ENCODE measurements at regions of chr3 and their contacts with region 1.

Region 1: GRCh38 chr3:39288300-39288808 is 8.5 kb upstream of the CX3CR1 start:
- DNase-seq: peak; percentile 91
- H3K4me3 Mint-ChIP-seq: no peak overlapping the region
- H3K27ac Mint-ChIP-seq: no peak overlapping the region
- H3K4me1 Mint-ChIP-seq: peaks cover 22% of the 10 kb centered on the region
- H3K27me3 Mint-ChIP-seq: no peaks in the 10 kb centered on the region
- CTCF ChIP-seq: peak; percentile 85

Region 2: GRCh38 chr3:39101022-39101689 is 187.2 kb before region 1 on chr3:
- CTCF ChIA-PET with region 1: interaction called, 11 read pairs
- intact Hi-C with region 1: loop called (anchors 1 kb)
- DNase-seq: peak; percentile 58
- H3K4me3 Mint-ChIP-seq: no peak overlapping the region
- H3K27ac Mint-ChIP-seq: no peak overlapping the region
- H3K4me1 Mint-ChIP-seq: peaks cover 50% of the 10 kb centered on the region
- H3K27me3 Mint-ChIP-seq: no peaks in the 10 kb centered on the region
- CTCF ChIP-seq: peak; percentile 71

Region 3: GRCh38 chr3:39126532-39127071 is 161.8 kb before region 1 on chr3:
- CTCF ChIA-PET with region 1: interaction called, 74 read pairs
- intact Hi-C with region 1: loop called (anchors 1 kb)
- DNase-seq: peak; percentile 68
- H3K4me3 Mint-ChIP-seq: peak overlapping the region; percentile 60
- H3K27ac Mint-ChIP-seq: peak overlapping the region; percentile 80
- H3K4me1 Mint-ChIP-seq: peaks cover 24% of the 10 kb centered on the region
- H3K27me3 Mint-ChIP-seq: no peaks in the 10 kb centered on the region
- CTCF ChIP-seq: peak; percentile 29

Region 4: GRCh38 chr3:39196671-39197356 is 91.5 kb before region 1 on chr3:
- CTCF ChIA-PET with region 1: interaction called, 12 read pairs
- intact Hi-C with region 1: no loop called
- DNase-seq: no peak
- H3K4me3 Mint-ChIP-seq: no peak overlapping the region
- H3K27ac Mint-ChIP-seq: no peak overlapping the region
- H3K4me1 Mint-ChIP-seq: peaks cover 6% of the 10 kb centered on the region
- H3K27me3 Mint-ChIP-seq: peaks cover 10% of the 10 kb centered on the region
- CTCF ChIP-seq: no peak

Region 5: GRCh38 chr3:39378088-39378487 is 89.7 kb after region 1 on chr3:
- CTCF ChIA-PET with region 1: interaction called, 32 read pairs
- intact Hi-C with region 1: loop called (anchors 2 kb)
- DNase-seq: peak; percentile 71
- H3K4me3 Mint-ChIP-seq: no peak overlapping the region
- H3K27ac Mint-ChIP-seq: no peak overlapping the region
- H3K4me1 Mint-ChIP-seq: peaks cover 9% of the 10 kb centered on the region
- H3K27me3 Mint-ChIP-seq: no peaks in the 10 kb centered on the region
- CTCF ChIP-seq: peak; percentile 57

Region 6: DNA sequence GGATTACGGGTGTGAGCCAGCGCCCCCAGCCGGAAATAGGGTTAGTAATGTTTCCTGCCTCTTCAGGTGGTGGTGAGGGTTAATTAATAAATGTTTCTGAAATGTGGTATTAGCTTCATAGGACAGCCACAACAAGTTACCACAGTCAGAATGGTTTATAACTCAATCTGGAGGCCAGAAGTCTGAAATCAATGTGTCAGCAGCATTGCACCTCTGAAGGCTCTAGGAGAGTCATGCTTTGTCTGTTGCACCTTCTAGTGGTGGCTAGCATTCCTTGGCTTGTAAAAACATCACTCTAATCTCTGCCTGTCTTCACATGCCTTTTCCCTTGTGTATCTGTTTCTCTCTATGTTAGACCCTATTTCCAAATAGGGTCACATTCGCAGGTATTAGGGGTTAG is 110.3 kb after region 1 on chr3:
- CTCF ChIA-PET with region 1: no interaction called
- intact Hi-C with region 1: no loop called
- DNase-seq: no peak
- H3K4me3 Mint-ChIP-seq: no peak overlapping the region
- H3K27ac Mint-ChIP-seq: no peak overlapping the region
- H3K4me1 Mint-ChIP-seq: no peaks in the 10 kb centered on the region
- H3K27me3 Mint-ChIP-seq: no peaks in the 10 kb centered on the region
- CTCF ChIP-seq: no peak